Calu3 (cell line): ENCODE measurements at regions of chr3 and their contacts with region 1.

Region 1: GRCh38 chr3:115525731-115526130 is 97.6 kb upstream of the GAP43 start:
- DNase-seq: no peak
- H3K4me3 Mint-ChIP-seq: no peak overlapping the region
- H3K27ac Mint-ChIP-seq: no peak overlapping the region
- H3K4me1 Mint-ChIP-seq: no peaks in the 10 kb centered on the region
- H3K27me3 Mint-ChIP-seq: peaks cover 75% of the 10 kb centered on the region
- CTCF ChIP-seq: no peak

Region 2: GRCh38 chr3:114764056-114764492 is 761.7 kb before region 1 on chr3:
- CTCF ChIA-PET with region 1: no interaction called
- intact Hi-C with region 1: no loop called
- DNase-seq: no peak
- H3K4me3 Mint-ChIP-seq: no peak overlapping the region
- H3K27ac Mint-ChIP-seq: no peak overlapping the region
- H3K4me1 Mint-ChIP-seq: peaks cover under 1% of the 10 kb centered on the region
- H3K27me3 Mint-ChIP-seq: no peaks in the 10 kb centered on the region
- CTCF ChIP-seq: no peak

Region 3: DNA sequence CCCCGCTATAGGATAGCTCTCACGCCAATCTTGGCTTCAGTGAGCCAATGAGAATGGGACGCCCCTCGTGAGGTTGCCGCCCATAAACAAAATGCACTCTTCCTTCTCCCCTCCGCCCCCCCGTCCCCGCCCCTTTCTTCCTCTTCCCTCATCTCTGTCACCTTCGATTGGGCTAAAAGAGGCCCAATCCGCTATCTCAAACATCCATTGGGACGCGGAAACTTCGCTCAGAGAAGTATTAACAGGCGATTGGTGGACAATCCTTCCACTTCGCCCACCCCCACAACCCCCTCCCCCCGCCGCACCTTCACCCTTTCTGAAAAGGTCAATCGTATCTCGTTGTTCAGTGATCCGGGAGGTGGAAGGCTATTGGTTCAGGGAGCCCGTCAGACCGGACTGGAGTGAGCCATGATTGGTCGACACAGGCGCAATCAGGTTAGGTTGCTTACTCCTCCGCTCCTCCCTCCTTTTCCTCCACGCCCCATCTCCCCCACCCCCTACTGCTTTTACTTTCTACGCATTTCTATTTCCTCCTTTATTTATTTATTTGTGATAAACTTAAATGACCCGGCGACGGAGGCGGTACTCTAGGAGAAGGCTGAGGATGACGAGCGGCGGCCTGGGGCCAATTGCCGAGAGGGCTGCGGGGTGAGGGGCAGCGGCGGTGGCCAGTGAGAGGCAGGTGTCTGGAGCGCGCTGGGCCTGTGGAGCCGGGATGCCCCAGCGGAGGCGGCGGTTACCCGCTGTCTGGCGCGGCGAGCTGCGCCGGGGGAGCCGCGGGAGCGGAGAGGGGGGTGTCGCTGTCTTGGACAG is 378.2 kb before region 1 on chr3:
- CTCF ChIA-PET with region 1: interaction called, 14 read pairs
- intact Hi-C with region 1: no loop called
- DNase-seq: peak; percentile 96
- H3K4me3 Mint-ChIP-seq: peak overlapping the region; percentile 80
- H3K27ac Mint-ChIP-seq: peak overlapping the region; percentile 94
- H3K4me1 Mint-ChIP-seq: no peaks in the 10 kb centered on the region
- H3K27me3 Mint-ChIP-seq: no peaks in the 10 kb centered on the region
- CTCF ChIP-seq: no peak

Region 4: DNA sequence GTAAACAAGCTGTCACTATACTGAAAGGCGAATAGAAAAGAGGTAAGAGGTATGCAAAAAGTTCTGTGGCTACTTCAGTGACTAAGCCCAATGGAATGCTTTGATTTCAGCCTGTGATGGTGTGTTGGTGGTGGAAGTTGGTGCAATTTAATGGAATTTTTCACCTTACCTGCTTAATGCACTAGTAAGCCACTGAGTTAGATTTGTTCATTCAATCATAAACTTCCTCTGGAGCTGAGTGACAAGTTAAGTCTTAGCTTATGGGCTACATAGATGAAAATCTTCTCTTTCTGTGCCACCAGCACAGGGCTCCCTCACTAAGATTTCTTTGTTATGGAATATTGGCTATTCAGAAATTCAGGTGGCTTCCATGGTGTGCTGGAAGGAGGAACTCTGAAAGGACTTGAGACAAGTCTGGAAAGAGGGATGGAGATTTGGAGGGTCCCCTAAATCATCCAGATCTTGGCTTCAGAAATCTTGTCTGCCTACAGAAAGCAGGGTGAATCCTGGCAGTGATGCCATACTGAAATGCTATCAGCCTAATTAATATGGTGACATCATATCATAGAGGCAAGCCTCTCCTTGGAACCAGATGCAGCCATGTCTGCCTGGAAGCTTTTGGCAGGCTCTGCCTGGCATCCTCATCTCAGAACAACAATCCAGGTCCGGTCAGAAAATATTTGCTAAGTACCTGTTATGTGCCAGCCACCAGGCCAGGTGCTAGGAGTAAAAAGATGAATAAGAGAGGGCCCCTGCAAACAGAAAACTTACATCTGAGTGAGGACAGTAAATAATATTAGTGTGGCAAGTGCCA is 89.5 kb after region 1 on chr3:
- CTCF ChIA-PET with region 1: no interaction called
- intact Hi-C with region 1: no loop called
- DNase-seq: peak; percentile 13
- H3K4me3 Mint-ChIP-seq: no peak overlapping the region
- H3K27ac Mint-ChIP-seq: no peak overlapping the region
- H3K4me1 Mint-ChIP-seq: no peaks in the 10 kb centered on the region
- H3K27me3 Mint-ChIP-seq: peaks cover 46% of the 10 kb centered on the region
- CTCF ChIP-seq: no peak